T-cell (primary cell): ENCODE measurements at regions of chr1 and their contacts with region 1.

Region 1: GRCh38 chr1:184771190-184771691 is 16.6 kb upstream of the EDEM3 start:
- DNase-seq: no peak
- ATAC-seq: no peak
- H3K4me3 ChIP-seq: no peak overlapping the region
- H3K4me3 Mint-ChIP-seq: no peak overlapping the region
- H3K27ac ChIP-seq: no peak overlapping the region
- H3K27ac Mint-ChIP-seq: no peak overlapping the region
- H3K4me1 ChIP-seq: no peaks in the 10 kb centered on the region
- H3K4me1 Mint-ChIP-seq: peaks cover 0 to 2% (median 0%) of the 10 kb centered on the region in 3 donors
- H3K27me3 ChIP-seq: no peaks in the 10 kb centered on the region
- H3K27me3 Mint-ChIP-seq: peaks cover 0 to 2% of the 10 kb centered on the region in 2 donors

Region 2: DNA sequence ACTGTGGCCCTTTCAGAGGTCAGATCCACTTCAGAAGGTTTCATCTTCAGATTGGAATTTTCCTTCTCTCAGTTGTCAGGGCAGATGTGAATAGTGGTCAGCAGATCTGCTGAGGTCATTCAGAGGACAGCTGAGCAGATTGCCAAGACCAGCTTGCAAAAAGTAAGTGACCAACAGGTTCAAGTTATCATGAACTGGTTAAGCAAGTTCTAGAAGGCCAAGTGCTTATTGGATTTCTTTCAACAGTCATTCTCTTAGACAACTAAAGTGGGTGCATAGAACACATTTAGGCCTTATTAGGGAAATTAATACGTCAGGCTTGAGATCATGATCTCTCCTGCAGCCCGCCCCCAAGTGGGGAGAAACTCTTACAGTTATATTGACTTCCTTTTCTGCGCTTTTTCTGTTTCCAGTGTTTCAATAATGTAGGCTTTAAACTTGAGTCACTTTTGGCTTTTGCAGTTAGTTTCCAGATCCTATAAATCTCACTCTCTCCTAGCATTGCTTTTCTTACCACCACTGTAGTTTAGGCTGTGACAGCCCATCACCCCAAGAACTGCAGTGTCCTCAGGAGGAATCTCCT is 288.0 kb before region 1 on chr1:
- CTCF ChIA-PET with region 1: no interaction called
- POLR2A ChIA-PET with region 1: no interaction called
- DNase-seq: no peak
- ATAC-seq: no peak
- H3K4me3 ChIP-seq: no peak overlapping the region
- H3K4me3 Mint-ChIP-seq: no peak overlapping the region
- H3K27ac ChIP-seq: no peak overlapping the region
- H3K27ac Mint-ChIP-seq: no peak overlapping the region
- H3K4me1 ChIP-seq: no peaks in the 10 kb centered on the region
- H3K4me1 Mint-ChIP-seq: no peaks in the 10 kb centered on the region
- H3K27me3 ChIP-seq: no peaks in the 10 kb centered on the region
- H3K27me3 Mint-ChIP-seq: peaks cover 2 to 7% of the 10 kb centered on the region in 2 donors

Region 3: DNA sequence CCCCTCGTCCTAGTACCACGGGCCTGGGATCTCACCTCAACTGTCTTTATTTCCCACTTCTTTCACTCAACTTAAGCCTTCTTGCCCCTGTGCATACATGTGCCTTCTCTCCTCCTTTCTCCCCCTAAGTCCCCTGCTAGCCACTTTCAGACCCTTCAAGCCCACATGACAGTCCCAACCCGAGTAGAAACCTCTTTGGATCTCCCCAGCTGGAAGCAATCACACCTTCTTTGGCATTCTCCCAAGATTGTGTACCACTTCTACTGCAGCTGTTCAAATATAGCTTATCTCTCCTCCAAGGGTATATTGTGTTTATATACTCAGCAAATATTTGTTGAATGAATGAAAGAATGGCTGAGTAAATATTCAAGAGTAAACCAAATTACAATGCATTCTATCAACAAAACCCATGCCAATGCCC is 134.2 kb after region 1 on chr1:
- CTCF ChIA-PET with region 1: no interaction called
- POLR2A ChIA-PET with region 1: interaction called in 1 of 2 experiments, 10 read pairs
- DNase-seq: no peak
- ATAC-seq: no peak
- H3K4me3 ChIP-seq: no peak overlapping the region
- H3K4me3 Mint-ChIP-seq: no peak overlapping the region
- H3K27ac ChIP-seq: peak overlapping the region; percentile 9
- H3K27ac Mint-ChIP-seq: peak overlapping the region; percentile 24 to 41
- H3K4me1 ChIP-seq: peaks cover 0 to 10% of the 10 kb centered on the region in 2 experiments
- H3K4me1 Mint-ChIP-seq: peaks cover 4 to 38% (median 23%) of the 10 kb centered on the region in 3 donors
- H3K27me3 ChIP-seq: no peaks in the 10 kb centered on the region
- H3K27me3 Mint-ChIP-seq: no peaks in the 10 kb centered on the region